ENCODE measurements at regions of chr18 and their contacts with region 1.

Region 1: DNA sequence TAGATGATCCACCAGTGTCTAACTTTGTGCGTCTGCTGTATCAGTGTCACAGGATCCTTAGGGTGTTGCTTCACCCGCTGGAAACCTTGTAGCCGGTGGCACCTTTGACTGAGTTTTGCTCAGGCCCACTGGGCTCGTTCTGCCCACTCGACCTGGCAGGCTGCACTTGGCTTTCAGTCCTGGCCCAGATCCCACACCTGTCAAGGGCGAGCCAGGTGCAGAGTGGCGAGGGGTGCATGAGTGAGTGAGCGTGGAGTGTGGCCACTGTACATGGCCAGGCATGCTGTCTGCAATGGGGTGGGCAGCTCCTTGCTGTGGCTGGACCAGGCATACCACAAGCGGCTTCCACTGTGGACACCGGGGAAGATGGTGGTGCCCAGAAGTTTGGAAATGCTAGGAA is 179.0 kb downstream of the FAM210A start:
- DNase-seq: no peak
- ATAC-seq: peak; percentile 45 to 65
- H3K4me3 ChIP-seq: no peak overlapping the region
- H3K27ac ChIP-seq: peak overlapping the region in 1 of 4 donors; percentile 42
- H3K4me1 ChIP-seq: peaks cover 21 to 24% of the 10 kb centered on the region in 2 donors
- H3K27me3 ChIP-seq: no peaks in the 10 kb centered on the region
- CTCF ChIP-seq: no peak
- POLR2A ChIP-seq: no peak

Region 2: GRCh38 chr18:13594551-13594950 is 47.2 kb after region 1 on chr18:
- in situ Hi-C with region 1: no loop called
- intact Hi-C with region 1: loop called (anchors 1 kb)
- DNase-seq: no peak
- ATAC-seq: no peak
- H3K4me3 ChIP-seq: no peak overlapping the region
- H3K27ac ChIP-seq: no peak overlapping the region
- H3K4me1 ChIP-seq: peaks cover 3 to 4% of the 10 kb centered on the region in 2 donors
- H3K27me3 ChIP-seq: no peaks in the 10 kb centered on the region
- CTCF ChIP-seq: no peak
- POLR2A ChIP-seq: no peak

Measured in gastrocnemius medialis (tissue), 4 donors.